Motor neuron (in vitro differentiated cells): ENCODE measurements at regions of chr1 and their contacts with region 1.

Region 1: GRCh38 chr1:180080433-180080832 is 74.2 kb upstream of the QSOX1 start:
- ATAC-seq: no peak
- H3K4me3 ChIP-seq: no peak overlapping the region
- H3K27ac ChIP-seq: no peak overlapping the region
- H3K4me1 ChIP-seq: no peaks in the 10 kb centered on the region

Region 2: DNA sequence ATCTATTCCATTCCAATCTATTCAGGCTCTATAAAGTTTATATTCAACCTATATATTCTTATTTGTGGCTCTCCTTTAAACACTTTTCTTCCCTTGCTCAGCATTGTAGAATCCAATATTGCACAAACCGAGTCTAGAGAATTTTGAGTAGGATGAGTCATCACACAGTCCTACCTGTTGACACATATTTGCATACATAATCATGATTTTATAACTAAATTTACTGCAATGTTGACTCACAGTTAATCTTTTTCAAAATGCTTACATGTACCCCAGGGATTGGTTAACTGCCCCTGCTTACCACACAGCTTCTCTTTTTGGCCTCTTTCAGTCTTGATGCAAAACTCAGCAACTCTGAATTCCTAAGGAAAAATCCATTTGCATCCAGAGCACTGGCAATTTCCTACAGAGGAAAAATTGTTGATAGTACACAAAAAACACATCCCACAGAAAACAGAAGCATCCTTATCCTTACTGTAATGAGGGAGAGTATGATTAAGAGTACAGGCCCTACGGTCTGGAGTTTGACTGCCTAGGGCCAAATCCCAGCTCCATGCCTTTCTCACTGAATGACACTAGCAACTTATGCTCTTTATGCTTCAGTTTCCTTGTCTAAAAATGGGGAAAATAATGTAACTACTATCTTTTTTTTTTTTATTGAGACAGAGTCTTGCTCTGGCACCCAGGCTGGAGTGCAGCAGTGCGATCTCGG is 153.8 kb before region 1 on chr1:
- in situ Hi-C with region 1: no loop called
- ATAC-seq: peak in 3 of 8 experiments; percentile 87 to 94 (median 90)
- H3K4me3 ChIP-seq: no peak overlapping the region
- H3K27ac ChIP-seq: no peak overlapping the region
- H3K4me1 ChIP-seq: peaks cover 0 to 14% of the 10 kb centered on the region in 2 donors

Region 3: DNA sequence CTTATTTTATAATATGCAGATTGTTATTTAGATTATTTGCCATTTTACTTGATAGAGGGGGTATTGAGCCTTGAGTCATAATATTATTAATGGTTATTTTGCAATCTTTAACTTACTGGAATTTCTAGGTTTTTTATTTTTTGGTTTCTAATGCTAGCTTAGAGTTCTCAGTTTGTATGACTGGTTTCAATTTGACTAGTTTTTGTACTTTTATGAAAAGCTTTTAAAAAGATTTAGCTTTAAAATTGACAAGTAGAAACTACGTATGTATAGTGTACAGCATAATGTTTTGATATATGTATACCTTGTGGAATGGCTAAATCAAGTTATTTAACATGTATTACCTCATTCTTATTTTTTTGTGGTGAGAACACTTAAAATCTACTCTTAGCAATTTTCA is 84.3 kb before region 1 on chr1:
- in situ Hi-C with region 1: loop called in 1 of 9 experiments (anchors 25 kb)
- ATAC-seq: no peak
- H3K4me3 ChIP-seq: no peak overlapping the region
- H3K27ac ChIP-seq: no peak overlapping the region
- H3K4me1 ChIP-seq: no peaks in the 10 kb centered on the region